Panc1 (cell line): ENCODE measurements at regions of chr5 and their contacts with region 1.

Region 1: DNA sequence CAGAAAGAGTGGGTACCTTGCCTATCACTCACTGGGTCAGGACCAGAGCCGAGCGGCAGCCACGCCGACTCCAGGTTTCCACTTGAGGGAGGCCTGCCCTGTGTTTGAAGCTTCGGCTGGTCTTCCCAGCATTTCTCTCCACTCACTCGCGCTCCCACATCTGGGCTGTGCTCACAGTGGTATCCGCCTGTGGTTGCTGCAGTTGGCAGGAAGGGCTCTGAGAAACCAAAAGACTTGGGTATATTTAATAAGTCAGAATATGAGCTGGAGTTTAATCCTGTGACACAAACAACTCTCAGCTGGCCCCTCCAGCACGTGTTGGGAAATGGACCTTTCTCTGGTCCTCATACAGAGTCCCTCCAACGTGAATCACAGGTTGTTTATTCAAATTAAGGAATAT is 70.9 kb downstream of the SPRY4 start:
- DNase-seq: no peak
- ATAC-seq: no peak
- H3K4me3 ChIP-seq: no peak overlapping the region
- H3K27ac ChIP-seq: no peak overlapping the region
- H3K4me1 ChIP-seq: no peaks in the 10 kb centered on the region; the same call in 1 of the 2 replicates
- H3K27me3 ChIP-seq: no peaks in the 10 kb centered on the region
- CTCF ChIP-seq: no peak

Region 2: GRCh38 chr5:142465476-142465875 is 211.5 kb after region 1 on chr5:
- CTCF ChIA-PET with region 1: interaction called, 11 read pairs
- POLR2A ChIA-PET with region 1: no interaction called
- in situ Hi-C with region 1: no loop called
- intact Hi-C with region 1: no loop called
- DNase-seq: no peak
- ATAC-seq: no peak
- H3K4me3 ChIP-seq: no peak overlapping the region
- H3K27ac ChIP-seq: no peak overlapping the region
- H3K4me1 ChIP-seq: no peaks in the 10 kb centered on the region
- H3K27me3 ChIP-seq: no peaks in the 10 kb centered on the region
- CTCF ChIP-seq: no peak